Transverse colon (tissue), 4 donors: ENCODE measurements at regions of chr18 and their contacts with region 1.

Region 1: GRCh38 chr18:9055185-9055584 is 47.3 kb upstream of the NDUFV2 start:
- DNase-seq: no peak
- H3K4me3 ChIP-seq: no peak overlapping the region
- H3K27ac ChIP-seq: no peak overlapping the region
- H3K4me1 ChIP-seq: peaks cover 0 to 7% (median 0%) of the 10 kb centered on the region in 4 donors
- H3K27me3 ChIP-seq: no peaks in the 10 kb centered on the region
- CTCF ChIP-seq: no peak
- EP300 ChIP-seq: no peak
- POLR2A ChIP-seq: no peak

Region 2: DNA sequence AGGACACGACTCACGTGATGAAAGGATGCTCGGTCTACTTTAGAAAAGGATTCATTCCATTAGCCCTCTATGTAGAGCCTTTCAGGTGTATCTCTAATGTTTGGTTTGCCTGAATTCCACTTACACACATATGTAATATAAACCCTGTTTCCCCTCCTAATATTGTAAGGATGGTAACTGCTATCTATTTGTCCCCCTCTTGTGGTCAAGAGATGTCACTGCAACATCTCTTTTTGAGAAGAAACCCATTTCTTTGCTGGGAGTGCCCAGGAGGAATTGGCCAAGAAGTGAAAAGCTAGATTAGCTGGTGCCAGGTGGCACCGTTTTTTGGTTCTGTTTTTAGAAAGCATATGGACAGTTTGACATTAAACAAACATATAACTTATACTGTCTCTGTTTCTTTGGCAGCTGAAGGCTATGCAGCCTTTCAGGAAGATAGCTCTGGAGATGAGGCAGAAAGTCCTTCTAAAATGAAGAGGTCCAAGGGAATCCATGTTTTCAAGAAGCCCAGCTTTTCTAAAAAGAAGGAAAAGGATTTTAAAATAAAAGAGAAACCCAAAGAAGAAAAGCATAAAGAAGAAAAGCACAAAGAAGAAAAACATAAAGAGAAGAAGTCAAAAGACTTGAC is 461.4 kb after region 1 on chr18:
- in situ Hi-C with region 1: loop called in 2 of 4 experiments (anchors 25 kb)
- intact Hi-C with region 1: no loop called
- DNase-seq: no peak
- H3K4me3 ChIP-seq: no peak overlapping the region
- H3K27ac ChIP-seq: peak overlapping the region in 1 of 4 donors; percentile 34
- H3K4me1 ChIP-seq: peaks cover 0 to 17% (median 0%) of the 10 kb centered on the region in 4 donors
- H3K27me3 ChIP-seq: no peaks in the 10 kb centered on the region
- CTCF ChIP-seq: peak; percentile 75 to 91 (median 81)
- EP300 ChIP-seq: no peak
- POLR2A ChIP-seq: no peak